Activated CD4-positive, alpha-beta T cell treated with anti-CD3 and anti-CD28 coated beads for 36 hours (primary cell): ENCODE measurements at regions of chr20 and their contacts with region 1.

Region 1: GRCh38 chr20:63739130-63740069 is at the start of gene SLC2A4RG:
- DNase-seq: peak; percentile 79
- ATAC-seq: peak; percentile 58
- H3K4me3 Mint-ChIP-seq: peak within 1 kb of the TSS; percentile 33
- H3K27ac Mint-ChIP-seq: no peak within 1 kb of the TSS
- H3K4me1 Mint-ChIP-seq: peaks cover 19% of the 10 kb centered on the region
- H3K27me3 Mint-ChIP-seq: no peaks in the 10 kb centered on the region
- total RNA-seq, gene SLC2A4RG: 30.9 to 34.9 TPM

Region 2: GRCh38 chr20:63553227-63553932 is 186.0 kb before region 1 on chr20:
- CTCF ChIA-PET with region 1: no interaction called
- POLR2A ChIA-PET with region 1: no interaction called
- intact Hi-C with region 1: loop called in 1 of 2 experiments (anchors 1 kb)
- DNase-seq: peak; percentile 95
- ATAC-seq: peak; percentile 88
- H3K4me3 Mint-ChIP-seq: no peak overlapping the region
- H3K27ac Mint-ChIP-seq: peak overlapping the region; percentile 45
- H3K4me1 Mint-ChIP-seq: peaks cover 11% of the 10 kb centered on the region
- H3K27me3 Mint-ChIP-seq: no peaks in the 10 kb centered on the region

Region 3: GRCh38 chr20:63657937-63658748 is 81.3 kb before region 1 on chr20 and contains the start of gene RTEL1:
- CTCF ChIA-PET with region 1: interaction called, 3 read pairs
- POLR2A ChIA-PET with region 1: no interaction called
- intact Hi-C with region 1: loop called in 1 of 2 experiments (anchors 2 kb)
- DNase-seq: peak; percentile 92
- ATAC-seq: peak; percentile 82
- H3K4me3 Mint-ChIP-seq: peak within 1 kb of the TSS; percentile 95
- H3K27ac Mint-ChIP-seq: peak within 1 kb of the TSS; percentile 94
- H3K4me1 Mint-ChIP-seq: peaks cover 30% of the 10 kb centered on the region
- H3K27me3 Mint-ChIP-seq: no peaks in the 10 kb centered on the region
- total RNA-seq, gene RTEL1: 44.5 to 44.7 TPM

Region 4: GRCh38 chr20:63707549-63708300 is 31.7 kb before region 1 on chr20 and contains the starts of genes ARFRP1 and ZGPAT:
- CTCF ChIA-PET with region 1: interaction called, 14 read pairs
- POLR2A ChIA-PET with region 1: interaction called, 10 read pairs
- intact Hi-C with region 1: loop called (anchors 1 to 5 kb)
- DNase-seq: peak; percentile 94
- ATAC-seq: peak; percentile 89
- H3K4me3 Mint-ChIP-seq: peak within 1 kb of the TSS; percentile 95
- H3K27ac Mint-ChIP-seq: peak within 1 kb of the TSS; percentile 90
- H3K4me1 Mint-ChIP-seq: peaks cover 44% of the 10 kb centered on the region
- H3K27me3 Mint-ChIP-seq: no peaks in the 10 kb centered on the region
- total RNA-seq, gene ARFRP1: 36.4 to 52.0 TPM
- total RNA-seq, gene ZGPAT: 15.3 to 21.9 TPM

Region 5: DNA sequence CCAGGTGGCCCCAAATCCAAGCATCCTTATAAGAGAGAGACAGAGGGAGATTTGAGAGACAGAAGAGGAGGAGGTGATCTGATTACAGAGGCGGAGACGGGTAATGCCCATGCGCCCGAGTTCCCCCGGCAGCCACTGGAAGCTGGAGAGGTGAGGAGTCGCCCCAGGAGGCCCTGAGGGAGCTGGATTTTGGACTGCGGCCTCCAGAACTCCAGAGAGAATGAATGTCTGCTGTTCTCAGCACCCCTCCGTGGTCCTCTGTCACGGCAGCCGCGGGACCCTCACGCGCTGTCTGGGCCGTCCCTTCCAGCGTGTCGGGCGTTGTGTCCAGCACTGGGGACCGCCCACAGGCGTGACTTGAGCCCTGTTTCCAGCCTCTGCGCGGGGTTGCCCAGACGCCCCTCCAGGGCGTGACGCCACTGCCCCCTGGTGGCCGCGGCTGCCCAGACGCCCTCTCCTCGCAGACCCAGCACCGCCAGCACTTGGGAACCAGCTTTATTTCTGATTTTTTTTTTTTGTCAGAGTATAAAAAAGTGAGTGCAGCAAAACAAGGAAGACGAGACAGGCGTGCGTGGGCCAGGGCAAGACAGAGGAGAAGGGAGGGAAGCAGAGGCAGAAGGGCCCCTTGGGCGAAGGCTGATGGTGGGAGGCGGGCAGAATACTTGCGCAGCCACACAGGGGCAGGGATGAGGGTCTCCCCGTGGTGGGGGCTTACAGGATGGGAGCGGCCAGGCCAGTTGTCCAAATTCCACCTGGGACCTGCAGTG is 234.4 kb after region 1 on chr20:
- CTCF ChIA-PET with region 1: interaction called, 3 read pairs
- POLR2A ChIA-PET with region 1: no interaction called
- intact Hi-C with region 1: loop called in 1 of 2 experiments (anchors 10 kb)
- DNase-seq: peak; percentile 89
- ATAC-seq: peak; percentile 34
- H3K4me3 Mint-ChIP-seq: no peak overlapping the region
- H3K27ac Mint-ChIP-seq: no peak overlapping the region
- H3K4me1 Mint-ChIP-seq: peaks cover 41% of the 10 kb centered on the region
- H3K27me3 Mint-ChIP-seq: no peaks in the 10 kb centered on the region